ENCODE measurements at regions of chr10 and their contacts with region 1.

Region 1: DNA sequence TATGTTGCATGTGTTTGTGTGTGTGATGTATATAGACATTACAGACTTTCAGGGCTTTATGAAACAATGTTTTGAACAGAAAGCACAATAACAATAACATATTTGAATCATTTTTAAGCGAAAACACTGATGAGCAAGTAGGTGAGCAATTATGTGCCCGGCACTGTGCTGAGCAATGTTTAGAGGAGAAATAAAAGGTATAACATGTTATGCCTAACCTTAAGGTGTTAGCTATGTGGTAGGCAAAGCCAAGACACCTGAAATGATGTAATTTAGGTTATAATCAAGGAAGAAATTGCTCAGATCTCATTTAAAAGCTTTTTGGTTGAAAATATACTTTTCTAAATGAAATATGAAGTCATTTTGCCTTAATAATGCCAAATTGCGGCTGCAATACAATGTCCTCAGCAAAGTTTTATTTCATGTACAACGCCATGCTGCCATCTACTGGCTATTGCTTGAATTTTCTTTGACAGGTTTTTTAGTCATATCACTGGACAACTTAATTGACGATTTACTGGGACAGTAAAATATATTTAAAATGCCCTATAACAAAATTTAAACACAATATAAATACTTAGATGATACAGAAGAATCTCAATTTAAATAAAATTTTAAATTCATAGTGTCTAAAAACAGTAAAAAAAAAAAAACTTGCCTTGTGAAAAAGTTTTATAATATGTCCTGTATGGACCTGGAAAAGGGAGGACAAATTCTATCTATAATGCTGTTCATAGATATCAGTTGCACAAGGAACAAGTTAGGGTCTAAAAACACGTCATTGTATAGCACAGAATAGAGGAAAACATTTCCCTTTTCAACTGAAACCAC is 131.1 kb upstream of the CDK1 start:
- DNase-seq: peak; percentile 68
- ATAC-seq: peak; percentile 61
- H3K4me3 ChIP-seq: no peak overlapping the region
- H3K4me3 Mint-ChIP-seq: no peak overlapping the region
- H3K27ac ChIP-seq: no peak overlapping the region
- H3K27ac Mint-ChIP-seq: no peak overlapping the region
- H3K4me1 ChIP-seq: peaks cover 0 to 2% of the 10 kb centered on the region in 2 donors
- H3K4me1 Mint-ChIP-seq: peaks cover 6% of the 10 kb centered on the region
- H3K27me3 ChIP-seq: no peaks in the 10 kb centered on the region
- H3K27me3 Mint-ChIP-seq: no peaks in the 10 kb centered on the region
- CTCF ChIP-seq: peak; percentile 92

Region 2: GRCh38 chr10:60099998-60100747 is 547.0 kb before region 1 on chr10:
- CTCF ChIA-PET with region 1: interaction called, 134 read pairs
- POLR2A ChIA-PET with region 1: no interaction called
- intact Hi-C with region 1: loop called (anchors 1 kb)
- DNase-seq: peak; percentile 61
- ATAC-seq: peak; percentile 49
- H3K4me3 ChIP-seq: no peak overlapping the region
- H3K4me3 Mint-ChIP-seq: no peak overlapping the region
- H3K27ac ChIP-seq: no peak overlapping the region
- H3K27ac Mint-ChIP-seq: no peak overlapping the region
- H3K4me1 ChIP-seq: no peaks in the 10 kb centered on the region
- H3K4me1 Mint-ChIP-seq: no peaks in the 10 kb centered on the region
- H3K27me3 ChIP-seq: no peaks in the 10 kb centered on the region
- H3K27me3 Mint-ChIP-seq: peaks cover 4% of the 10 kb centered on the region
- CTCF ChIP-seq: peak; percentile 89

Region 3: DNA sequence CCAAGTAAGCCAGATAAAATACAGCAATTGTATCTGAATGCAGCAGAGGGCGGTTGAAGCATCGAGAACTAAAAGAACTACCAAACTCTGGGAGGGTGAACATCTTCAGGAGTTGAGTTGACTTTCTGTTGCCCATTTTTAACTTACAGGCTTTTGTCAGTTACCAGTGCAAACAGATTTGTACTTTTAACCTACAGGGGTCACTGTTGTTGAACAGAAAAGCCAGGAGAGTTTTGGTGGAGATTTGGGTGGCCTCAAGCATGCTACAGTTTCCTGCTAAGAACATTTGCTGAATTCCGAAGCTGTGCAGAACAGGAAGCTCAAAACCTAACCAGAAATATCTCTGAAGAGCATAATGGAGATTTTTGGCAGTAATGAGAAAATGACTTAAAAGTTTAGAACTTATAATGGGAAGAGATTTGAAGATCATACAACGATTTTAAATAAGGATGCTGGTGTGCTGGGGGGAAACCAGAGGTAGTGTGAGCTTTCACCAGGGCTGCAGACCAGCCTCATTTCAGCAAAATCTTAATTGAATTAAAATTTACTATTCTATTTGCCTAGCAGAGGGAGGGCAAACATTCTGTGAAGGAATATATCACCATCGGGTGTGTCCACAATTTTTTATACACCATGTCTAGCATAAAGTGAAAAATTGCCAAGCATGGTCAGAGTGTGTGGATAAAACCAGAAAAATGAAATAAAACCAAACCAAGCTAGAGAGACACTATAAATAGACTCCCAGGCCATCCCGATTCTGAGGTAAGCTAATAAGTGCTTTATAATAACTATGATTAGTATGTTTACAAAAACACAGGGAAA is 532.2 kb before region 1 on chr10:
- CTCF ChIA-PET with region 1: interaction called, 34 read pairs
- POLR2A ChIA-PET with region 1: no interaction called
- intact Hi-C with region 1: loop called (anchors 1 kb)
- DNase-seq: peak; percentile 61
- ATAC-seq: peak; percentile 53
- H3K4me3 ChIP-seq: no peak overlapping the region
- H3K4me3 Mint-ChIP-seq: no peak overlapping the region
- H3K27ac ChIP-seq: no peak overlapping the region
- H3K27ac Mint-ChIP-seq: no peak overlapping the region
- H3K4me1 ChIP-seq: peaks cover 4 to 6% of the 10 kb centered on the region in 2 donors
- H3K4me1 Mint-ChIP-seq: no peaks in the 10 kb centered on the region
- H3K27me3 ChIP-seq: no peaks in the 10 kb centered on the region
- H3K27me3 Mint-ChIP-seq: no peaks in the 10 kb centered on the region
- CTCF ChIP-seq: peak; percentile 68

Region 4: DNA sequence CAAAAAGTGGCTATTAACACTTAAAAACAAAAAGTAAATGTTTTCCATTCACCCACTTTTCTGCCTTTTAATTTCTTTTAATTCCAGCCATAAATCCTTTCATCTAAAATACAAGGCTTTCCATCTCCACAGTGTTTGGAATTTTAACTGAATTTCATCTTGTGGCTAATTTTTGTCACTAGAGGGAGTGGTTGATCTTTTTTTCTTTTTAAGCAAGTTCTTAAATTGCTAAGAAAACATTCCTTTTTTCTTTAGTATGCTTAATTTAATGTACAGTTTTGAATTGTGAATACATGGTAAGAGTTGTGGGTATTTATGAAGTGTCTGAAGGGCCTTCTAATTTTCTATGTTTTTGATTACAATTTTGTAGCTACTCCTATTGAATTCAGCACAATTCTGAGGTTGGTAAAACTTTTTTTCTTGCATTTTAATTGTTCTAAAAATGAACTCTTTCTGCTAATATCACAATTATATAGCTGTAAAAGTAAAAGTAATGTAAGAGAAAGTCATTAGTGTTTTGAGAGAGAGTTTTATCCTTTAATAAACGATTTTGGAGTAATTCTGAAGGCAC is 202.6 kb before region 1 on chr10:
- CTCF ChIA-PET with region 1: interaction called, 51 read pairs
- POLR2A ChIA-PET with region 1: no interaction called
- intact Hi-C with region 1: loop called (anchors 2 kb)
- DNase-seq: no peak
- ATAC-seq: no peak
- H3K4me3 ChIP-seq: no peak overlapping the region
- H3K4me3 Mint-ChIP-seq: no peak overlapping the region
- H3K27ac ChIP-seq: no peak overlapping the region
- H3K27ac Mint-ChIP-seq: no peak overlapping the region
- H3K4me1 ChIP-seq: peaks cover 7 to 8% of the 10 kb centered on the region in 2 donors
- H3K4me1 Mint-ChIP-seq: peaks cover 8% of the 10 kb centered on the region
- H3K27me3 ChIP-seq: no peaks in the 10 kb centered on the region
- H3K27me3 Mint-ChIP-seq: no peaks in the 10 kb centered on the region
- CTCF ChIP-seq: peak; percentile 27

Region 5: GRCh38 chr10:60662917-60663614 is 15.9 kb after region 1 on chr10:
- CTCF ChIA-PET with region 1: interaction called, 15 read pairs
- POLR2A ChIA-PET with region 1: no interaction called
- intact Hi-C with region 1: no loop called
- DNase-seq: no peak
- ATAC-seq: no peak
- H3K4me3 ChIP-seq: no peak overlapping the region
- H3K4me3 Mint-ChIP-seq: no peak overlapping the region
- H3K27ac ChIP-seq: no peak overlapping the region
- H3K27ac Mint-ChIP-seq: no peak overlapping the region
- H3K4me1 ChIP-seq: no peaks in the 10 kb centered on the region
- H3K4me1 Mint-ChIP-seq: no peaks in the 10 kb centered on the region
- H3K27me3 ChIP-seq: peaks cover 0 to 5% (median 2%) of the 10 kb centered on the region in 4 experiments
- H3K27me3 Mint-ChIP-seq: peaks cover 8% of the 10 kb centered on the region
- CTCF ChIP-seq: no peak

Region 6: GRCh38 chr10:60870424-60870728 is 223.2 kb after region 1 on chr10:
- CTCF ChIA-PET with region 1: no interaction called
- POLR2A ChIA-PET with region 1: no interaction called
- intact Hi-C with region 1: no loop called
- DNase-seq: no peak
- ATAC-seq: no peak
- H3K4me3 ChIP-seq: no peak overlapping the region
- H3K4me3 Mint-ChIP-seq: no peak overlapping the region
- H3K27ac ChIP-seq: no peak overlapping the region
- H3K27ac Mint-ChIP-seq: no peak overlapping the region
- H3K4me1 ChIP-seq: no peaks in the 10 kb centered on the region
- H3K4me1 Mint-ChIP-seq: no peaks in the 10 kb centered on the region
- H3K27me3 ChIP-seq: no peaks in the 10 kb centered on the region
- H3K27me3 Mint-ChIP-seq: peaks cover 7% of the 10 kb centered on the region
- CTCF ChIP-seq: no peak

Measured in B cell (primary cell).